ENCODE measurements at regions of chr13 and their contacts with region 1.

Region 1: GRCh38 chr13:74145249-74145975 is 11.2 kb upstream of the KLF12 start:
- DNase-seq: no peak
- ATAC-seq: peak in 1 of 8 donors; percentile 51
- H3K4me3 ChIP-seq: no peak overlapping the region
- H3K27ac ChIP-seq: no peak overlapping the region
- H3K4me1 ChIP-seq: peaks cover 0 to 15% (median 6%) of the 10 kb centered on the region in 9 donors
- H3K27me3 ChIP-seq: no peaks in the 10 kb centered on the region
- CTCF ChIP-seq: no peak

Region 2: DNA sequence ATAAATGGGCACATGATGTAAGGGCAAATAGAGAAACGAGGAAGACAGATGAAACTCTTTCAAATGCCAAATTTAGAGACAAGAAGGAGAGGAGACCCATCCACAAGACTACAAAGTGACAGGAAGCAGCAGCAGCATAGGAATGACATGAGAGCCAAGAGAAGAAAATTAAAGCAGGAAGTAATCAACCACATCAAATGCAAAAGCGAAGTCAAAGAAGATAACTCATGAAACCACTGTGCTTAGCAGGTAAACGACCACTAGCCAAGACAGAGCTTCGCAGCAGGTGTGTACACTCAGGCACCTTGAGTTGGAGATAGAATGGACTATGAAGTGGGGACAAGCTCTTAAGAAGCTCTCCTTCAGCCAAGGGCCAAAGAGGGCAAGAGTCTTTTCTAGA is 75.3 kb before region 1 on chr13:
- intact Hi-C with region 1: no loop called
- DNase-seq: no peak
- ATAC-seq: no peak
- H3K4me3 ChIP-seq: no peak overlapping the region
- H3K27ac ChIP-seq: no peak overlapping the region
- H3K4me1 ChIP-seq: peaks cover 5 to 51% (median 31%) of the 10 kb centered on the region in 9 donors
- H3K27me3 ChIP-seq: no peaks in the 10 kb centered on the region
- CTCF ChIP-seq: no peak

Region 3: GRCh38 chr13:74280795-74281490 is 135.5 kb after region 1 on chr13:
- intact Hi-C with region 1: loop called in 2 of 10 experiments (anchors 5 to 10 kb)
- DNase-seq: no peak
- ATAC-seq: no peak
- H3K4me3 ChIP-seq: no peak overlapping the region
- H3K27ac ChIP-seq: no peak overlapping the region
- H3K4me1 ChIP-seq: no peaks in the 10 kb centered on the region
- H3K27me3 ChIP-seq: no peaks in the 10 kb centered on the region
- CTCF ChIP-seq: no peak

Region 4: GRCh38 chr13:74301258-74301935 is 156.0 kb after region 1 on chr13:
- intact Hi-C with region 1: loop called in 1 of 10 experiments (anchors 5 kb)
- DNase-seq: no peak
- ATAC-seq: peak in 5 of 8 donors; percentile 61 to 68 (median 66)
- H3K4me3 ChIP-seq: no peak overlapping the region
- H3K27ac ChIP-seq: peak overlapping the region in 5 of 10 donors; percentile 13 to 51 (median 46)
- H3K4me1 ChIP-seq: peaks cover 0 to 14% (median 0%) of the 10 kb centered on the region in 9 donors
- H3K27me3 ChIP-seq: no peaks in the 10 kb centered on the region
- CTCF ChIP-seq: no peak

Measured in heart right ventricle (tissue), 16 donors.